Cardiac septum (tissue), 1 donor: ENCODE measurements at regions of chr9 and their contacts with region 1.

Region 1: DNA sequence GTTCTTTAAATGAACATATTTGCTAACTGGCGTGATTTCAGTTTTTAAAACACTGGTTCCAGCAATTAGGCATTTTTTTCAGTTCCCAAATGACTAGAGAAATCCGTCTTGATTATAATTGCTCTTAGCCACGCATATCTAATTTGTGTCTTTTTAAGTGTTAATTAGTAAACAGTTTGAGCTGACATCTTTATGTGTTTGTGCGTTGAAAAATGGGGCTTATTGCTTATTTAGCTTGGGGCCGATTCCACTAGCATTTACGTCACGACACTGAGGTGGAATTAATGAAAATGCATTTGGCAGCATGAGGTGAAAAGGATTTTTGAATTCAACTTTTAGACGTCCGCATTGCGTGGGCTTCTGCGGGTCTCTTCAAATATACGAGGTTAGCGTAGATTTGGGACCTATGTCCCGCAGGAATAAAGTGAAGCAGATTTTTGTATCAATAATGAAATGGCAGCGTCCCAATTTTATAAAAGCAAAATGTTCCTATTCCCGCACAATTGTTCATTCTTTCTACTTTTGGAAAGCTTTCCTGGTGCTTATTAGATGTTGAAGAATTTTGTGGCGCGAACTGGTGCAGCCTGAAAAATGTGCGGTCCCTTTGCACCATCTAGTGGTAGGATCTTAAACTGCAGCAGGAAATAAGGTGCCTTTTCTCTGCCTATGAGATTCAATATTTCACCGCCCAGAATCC is 122.7 kb upstream of the LMX1B start:
- DNase-seq: no peak

Region 2: DNA sequence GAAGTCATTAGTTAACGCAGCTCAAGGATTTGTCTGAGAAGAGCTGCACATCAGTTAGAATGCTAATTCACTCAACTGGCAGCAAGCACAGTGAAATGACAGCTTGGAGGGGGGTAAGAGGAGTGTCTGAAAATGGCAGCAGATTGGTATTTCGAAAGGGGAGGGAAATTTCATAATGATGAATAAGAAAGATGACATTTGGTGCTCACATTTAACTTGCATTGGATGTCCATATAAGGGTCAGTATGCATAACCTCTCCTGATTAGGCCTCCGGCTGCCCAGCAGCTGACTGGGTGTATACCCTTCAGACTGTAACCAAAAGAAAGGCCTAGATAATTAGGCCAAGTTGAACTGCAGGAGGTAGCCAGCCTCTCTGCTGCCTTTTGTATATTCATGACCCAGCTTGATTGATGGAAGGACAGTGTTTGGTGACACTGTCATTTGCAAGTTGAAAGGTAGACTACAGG is 612.8 kb before region 1 on chr9:
- intact Hi-C with region 1: no loop called
- DNase-seq: no peak

Region 3: GRCh38 chr9:126301985-126302603 is 188.9 kb before region 1 on chr9:
- intact Hi-C with region 1: loop called (anchors 2 kb)
- DNase-seq: no peak